ENCODE measurements at regions of chr6 and their contacts with region 1.

Region 1: GRCh38 chr6:79777713-79778579 is 146.8 kb downstream of the SH3BGRL2 start:
- DNase-seq: peak; percentile 73 to 83
- ATAC-seq: peak; percentile 87 to 96 (median 92)
- H3K4me3 ChIP-seq: peak overlapping the region in 9 of 10 donors; percentile 5 to 48 (median 40)
- H3K27ac ChIP-seq: peak overlapping the region in 1 of 10 donors; percentile 32
- H3K4me1 ChIP-seq: peaks cover 0 to 11% (median 0%) of the 10 kb centered on the region in 9 donors
- H3K27me3 ChIP-seq: peaks cover 0 to 6% (median 0%) of the 10 kb centered on the region in 7 donors
- CTCF ChIP-seq: peak; percentile 91 to 100 (median 99)

Region 2: GRCh38 chr6:79813854-79814709 is 36.1 kb after region 1 on chr6:
- intact Hi-C with region 1: loop called in 2 of 10 experiments (anchors 2 to 5 kb)
- DNase-seq: peak; percentile 33 to 70
- ATAC-seq: peak in 6 of 8 donors; percentile 53 to 75 (median 68)
- H3K4me3 ChIP-seq: no peak overlapping the region
- H3K27ac ChIP-seq: no peak overlapping the region
- H3K4me1 ChIP-seq: no peaks in the 10 kb centered on the region
- H3K27me3 ChIP-seq: no peaks in the 10 kb centered on the region
- CTCF ChIP-seq: peak; percentile 64 to 92 (median 85)

Region 3: GRCh38 chr6:79869600-79870084 is 91.7 kb after region 1 on chr6:
- intact Hi-C with region 1: loop called in 8 of 10 experiments (anchors 2 to 5 kb)
- DNase-seq: peak; percentile 60 to 78
- ATAC-seq: peak; percentile 93 to 99 (median 98)
- H3K4me3 ChIP-seq: peak overlapping the region in 7 of 10 donors; percentile 5 to 39 (median 30)
- H3K27ac ChIP-seq: no peak overlapping the region
- H3K4me1 ChIP-seq: peaks cover 0 to 16% (median 0%) of the 10 kb centered on the region in 9 donors
- H3K27me3 ChIP-seq: peaks cover 0 to 6% (median 0%) of the 10 kb centered on the region in 7 donors
- CTCF ChIP-seq: peak; percentile 79 to 96 (median 91)

Region 4: DNA sequence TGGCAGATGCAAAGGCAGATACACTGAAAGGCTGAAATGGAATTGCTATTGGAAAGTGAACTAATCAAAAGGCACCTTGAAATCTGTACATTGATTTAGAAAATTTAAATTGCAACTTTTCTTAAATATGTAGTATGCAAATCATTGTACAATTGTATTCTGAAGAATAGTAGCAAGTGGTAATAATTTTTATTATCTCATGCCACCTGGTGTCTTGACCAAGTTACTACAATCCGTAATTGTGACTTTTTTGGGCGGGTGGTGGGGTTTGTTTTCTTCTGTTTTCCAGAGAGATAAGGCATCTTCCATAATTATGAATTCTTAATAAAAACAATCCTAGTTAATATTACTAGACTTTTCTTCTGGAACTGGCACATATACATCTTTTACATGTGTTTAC is 316.1 kb after region 1 on chr6:
- intact Hi-C with region 1: loop called in 7 of 10 experiments (anchors 5 to 10 kb)
- DNase-seq: no peak
- ATAC-seq: no peak
- H3K4me3 ChIP-seq: no peak overlapping the region
- H3K27ac ChIP-seq: no peak overlapping the region
- H3K4me1 ChIP-seq: no peaks in the 10 kb centered on the region
- H3K27me3 ChIP-seq: peaks cover 0 to 2% (median 0%) of the 10 kb centered on the region in 7 donors
- CTCF ChIP-seq: peak in 8 of 9 donors; percentile 15 to 65 (median 58)

Measured in heart right ventricle (tissue), 16 donors.